ENCODE measurements at regions of chr7 and their contacts with region 1.

Region 1: GRCh38 chr7:77910124-77910523 is 111.6 kb downstream of the PHTF2 start:
- DNase-seq: no peak

Region 2: DNA sequence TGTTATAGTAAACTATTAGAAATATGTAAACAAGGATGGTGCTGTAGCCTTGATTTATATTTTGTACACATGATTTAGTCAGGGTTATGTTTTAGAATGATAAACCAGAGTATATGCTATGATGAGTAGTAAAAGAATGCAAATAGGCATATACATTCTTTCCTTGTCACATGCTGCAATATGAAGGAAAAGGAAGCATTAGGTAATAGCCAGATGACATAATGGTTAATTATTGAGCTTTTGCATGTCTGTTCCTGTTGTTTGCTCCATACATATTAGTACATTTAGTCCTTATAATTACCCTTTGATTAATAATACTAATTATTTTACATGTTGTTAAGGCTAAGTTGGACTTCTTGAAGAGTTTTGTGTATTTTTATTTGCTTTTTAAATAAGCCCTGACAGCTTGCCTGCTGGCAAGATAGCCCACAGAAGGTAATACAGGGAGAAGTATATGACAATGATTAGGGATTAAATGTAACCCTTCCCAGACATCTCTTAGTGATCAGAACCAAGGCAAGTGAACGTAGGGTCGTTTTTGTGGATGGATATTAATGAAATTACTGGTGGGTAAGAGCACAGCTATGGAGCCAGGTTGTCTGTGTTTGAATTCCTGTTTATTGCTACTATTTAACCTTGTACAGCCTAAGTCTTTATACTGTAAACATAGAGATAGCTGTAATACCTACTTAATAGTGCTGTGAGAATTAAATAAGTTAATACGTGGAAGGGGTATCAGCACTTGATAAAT is 43.2 kb before region 1 on chr7:
- intact Hi-C with region 1: loop called in 1 of 2 experiments (anchors 5 kb)
- DNase-seq: no peak

Region 3: DNA sequence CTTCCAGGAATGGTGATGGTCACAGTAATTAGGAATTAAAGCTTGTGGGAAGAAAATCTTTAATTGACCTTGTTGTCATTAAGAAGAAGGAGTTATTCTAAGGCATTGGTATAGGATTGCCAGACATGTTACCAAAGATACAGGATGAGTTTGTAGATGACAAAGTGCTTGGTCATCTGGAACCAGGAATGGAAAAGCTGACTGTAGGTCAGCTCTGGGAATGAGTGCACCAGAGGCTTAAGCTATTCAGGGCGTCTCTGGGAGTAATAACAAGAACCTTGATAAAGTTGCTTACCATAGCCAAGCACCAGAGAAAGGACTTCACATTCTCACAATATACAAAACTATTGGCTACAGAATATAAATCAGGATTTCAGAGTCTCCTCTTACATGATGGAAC is 22.6 kb before region 1 on chr7:
- intact Hi-C with region 1: no loop called
- DNase-seq: no peak

Region 4: GRCh38 chr7:77923419-77923818 is 13.3 kb after region 1 on chr7:
- intact Hi-C with region 1: loop called in 1 of 2 experiments (anchors 1 kb)
- DNase-seq: no peak

Measured in posterior vena cava (tissue), 2 donors.